Prostate gland (tissue), 2 donors: ENCODE measurements at regions of chr15 and their contacts with region 1.

Region 1: DNA sequence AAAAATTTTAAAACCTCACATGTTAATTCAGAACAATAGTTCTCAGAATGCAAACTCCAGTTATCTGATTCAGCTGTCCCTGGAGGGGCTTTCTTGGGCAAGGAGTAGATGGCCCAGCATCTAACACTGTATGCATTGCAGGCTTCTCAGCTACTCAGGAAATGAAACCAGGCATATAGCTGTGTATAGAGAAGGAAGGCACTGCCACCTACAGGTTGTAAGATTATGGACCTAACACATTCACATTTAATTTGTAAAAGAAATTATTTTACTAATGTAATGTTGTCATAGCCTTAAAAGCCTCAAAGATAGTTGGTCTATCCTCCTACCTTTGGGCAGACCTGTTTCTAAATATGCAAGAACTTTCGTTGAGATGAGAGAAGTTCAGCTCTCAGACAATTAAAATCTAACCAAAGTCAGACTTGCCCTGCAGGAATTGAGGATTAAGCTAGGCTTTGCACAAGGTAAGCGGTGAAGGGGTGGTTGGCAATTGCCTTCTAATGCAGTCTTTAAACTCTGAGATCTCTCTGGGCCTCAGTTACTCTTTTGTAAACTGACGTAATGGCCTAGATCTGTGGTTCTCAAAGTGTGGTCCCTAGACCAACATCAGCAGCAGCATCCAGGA is 132.8 kb upstream of the SLC24A5 start:
- DNase-seq: peak; percentile 57
- H3K4me3 ChIP-seq: no peak overlapping the region
- H3K27ac ChIP-seq: no peak overlapping the region
- H3K4me1 ChIP-seq: no peaks in the 10 kb centered on the region
- H3K27me3 ChIP-seq: no peaks in the 10 kb centered on the region
- CTCF ChIP-seq: peak in 3 of 4 experiments; percentile 66 to 82 (median 77)
- POLR2A ChIP-seq: no peak

Region 2: DNA sequence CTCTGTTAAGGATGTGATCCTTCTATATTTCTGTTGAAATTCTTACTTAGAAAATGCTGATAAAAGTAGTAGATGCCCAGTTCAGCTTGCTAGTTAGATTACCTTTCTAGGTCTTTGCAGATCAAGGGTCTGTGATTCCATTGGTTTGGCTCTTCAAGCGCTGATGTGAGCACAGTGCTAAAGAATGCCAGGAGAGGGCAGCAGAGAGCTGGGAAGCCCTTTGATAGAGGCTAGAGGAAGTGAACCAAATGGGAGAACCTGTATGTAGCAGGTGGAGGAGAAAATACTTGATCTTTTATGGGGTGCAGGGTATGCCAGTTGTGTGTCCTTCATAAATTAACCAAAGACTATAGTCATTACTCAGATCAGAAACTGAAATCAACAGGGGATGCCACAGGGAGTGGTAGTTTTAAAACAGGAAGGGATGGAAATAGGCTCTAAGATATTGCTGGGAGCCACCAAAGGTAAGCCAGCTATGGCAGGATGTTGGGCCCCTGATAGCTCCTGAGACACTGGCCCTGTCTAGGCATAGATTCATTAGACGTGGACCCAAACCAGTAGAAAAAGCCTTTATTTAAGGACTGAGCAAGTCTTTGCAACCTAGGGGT is 1675.8 kb before region 1 on chr15:
- intact Hi-C with region 1: loop called (anchors 10 kb)
- DNase-seq: peak; percentile 61
- H3K4me3 ChIP-seq: no peak overlapping the region
- H3K27ac ChIP-seq: no peak overlapping the region
- H3K4me1 ChIP-seq: no peaks in the 10 kb centered on the region
- H3K27me3 ChIP-seq: no peaks in the 10 kb centered on the region
- CTCF ChIP-seq: peak in 3 of 4 experiments; percentile 55 to 71 (median 71)
- POLR2A ChIP-seq: no peak

Region 3: DNA sequence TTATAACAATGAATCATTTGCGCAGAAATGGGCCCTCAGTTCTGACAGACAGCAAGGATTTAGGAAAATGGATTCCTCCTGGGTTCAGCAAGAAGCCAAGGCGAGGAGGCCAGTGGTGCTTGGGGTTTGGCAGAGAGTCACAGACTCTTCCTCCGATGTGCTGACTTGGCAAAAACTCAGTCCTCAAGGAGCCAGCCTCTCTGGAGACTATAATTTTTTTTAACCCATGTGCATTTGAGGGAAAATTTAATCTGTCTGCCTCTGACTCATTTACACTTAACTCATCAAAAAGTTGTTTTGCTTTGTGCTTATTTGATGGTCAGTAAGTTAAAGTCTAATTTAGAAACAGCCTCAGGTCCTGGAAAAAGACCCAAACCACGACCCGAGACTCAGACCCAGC is 98.6 kb after region 1 on chr15:
- intact Hi-C with region 1: no loop called
- DNase-seq: no peak
- H3K4me3 ChIP-seq: no peak overlapping the region
- H3K27ac ChIP-seq: no peak overlapping the region
- H3K4me1 ChIP-seq: no peaks in the 10 kb centered on the region
- H3K27me3 ChIP-seq: no peaks in the 10 kb centered on the region
- CTCF ChIP-seq: no peak
- POLR2A ChIP-seq: no peak